ENCODE measurements at regions of chr3 and their contacts with region 1.

Region 1: DNA sequence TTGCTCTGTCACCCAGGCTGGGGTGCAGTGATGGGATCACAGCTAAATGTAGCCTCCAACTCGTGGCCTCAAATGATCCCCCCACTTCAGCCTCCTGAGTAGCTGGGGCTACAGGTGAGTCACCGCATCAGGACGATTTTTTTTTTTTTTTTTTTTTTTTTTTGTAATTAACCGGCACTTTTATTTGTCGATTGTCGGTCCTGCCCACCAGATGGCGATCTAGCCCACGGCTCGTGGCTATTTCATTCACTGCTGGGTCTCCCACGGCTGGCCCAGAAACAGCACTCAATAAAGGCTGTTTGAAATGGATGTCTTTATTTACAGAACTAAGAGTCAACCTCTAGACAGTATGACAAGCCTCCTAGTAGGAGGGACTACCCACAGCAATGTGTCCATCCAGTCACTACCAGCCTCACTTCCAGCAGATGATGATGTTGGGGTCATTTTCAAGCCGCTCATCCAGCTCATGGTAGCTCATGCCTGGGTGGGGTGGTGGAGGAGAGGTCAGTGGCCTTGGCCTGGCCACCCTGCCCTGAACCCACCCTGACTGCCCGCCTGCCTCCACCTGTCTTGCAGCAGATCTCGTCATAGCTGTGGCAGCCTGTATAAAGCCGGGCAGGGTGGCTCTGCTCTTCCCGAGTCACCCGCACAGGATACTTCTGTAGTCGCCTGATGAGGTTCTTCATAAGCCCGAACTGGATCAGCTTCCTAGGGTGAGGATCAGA is 1.8 kb upstream of the ZMYND10 start:
- DNase-seq: peak; percentile 75
- CTCF ChIP-seq: peak; percentile 59

Region 2: DNA sequence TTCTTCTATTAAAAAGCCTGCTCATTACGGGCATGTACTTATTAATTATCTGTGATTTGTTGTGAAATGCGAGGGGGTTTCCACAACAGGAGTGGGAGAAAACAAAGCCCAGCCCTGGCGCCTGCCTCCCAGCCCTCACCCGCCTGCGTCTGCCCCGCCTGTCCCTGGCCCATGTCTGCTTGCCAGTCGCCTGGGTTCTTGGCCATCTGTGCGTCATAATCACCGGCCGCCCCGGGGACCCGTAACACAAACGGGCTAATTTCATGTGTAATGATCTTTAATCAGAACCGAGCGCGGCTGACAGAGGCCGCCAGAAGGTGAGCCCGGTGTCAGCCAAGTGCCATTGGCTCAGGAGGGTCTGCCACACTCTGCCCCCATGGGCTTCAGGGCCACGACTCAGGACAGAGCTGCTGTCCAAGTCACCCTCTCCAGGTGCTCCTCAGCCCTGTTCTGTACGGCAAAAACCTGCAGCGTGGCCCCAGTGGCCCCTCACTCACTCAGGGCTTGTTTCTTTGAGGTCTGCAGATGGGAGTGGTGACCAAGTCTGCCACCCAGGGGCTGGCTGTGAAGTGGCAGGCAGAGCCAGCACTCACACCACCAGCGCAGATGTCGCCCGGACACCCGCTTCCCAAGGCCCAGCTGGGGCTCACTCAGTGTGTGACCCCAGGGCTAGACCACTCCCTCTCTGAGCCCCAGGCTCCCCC is 40.8 kb after region 1 on chr3:
- in situ Hi-C with region 1: no loop called
- DNase-seq: no peak
- CTCF ChIP-seq: peak; percentile 26

Region 3: DNA sequence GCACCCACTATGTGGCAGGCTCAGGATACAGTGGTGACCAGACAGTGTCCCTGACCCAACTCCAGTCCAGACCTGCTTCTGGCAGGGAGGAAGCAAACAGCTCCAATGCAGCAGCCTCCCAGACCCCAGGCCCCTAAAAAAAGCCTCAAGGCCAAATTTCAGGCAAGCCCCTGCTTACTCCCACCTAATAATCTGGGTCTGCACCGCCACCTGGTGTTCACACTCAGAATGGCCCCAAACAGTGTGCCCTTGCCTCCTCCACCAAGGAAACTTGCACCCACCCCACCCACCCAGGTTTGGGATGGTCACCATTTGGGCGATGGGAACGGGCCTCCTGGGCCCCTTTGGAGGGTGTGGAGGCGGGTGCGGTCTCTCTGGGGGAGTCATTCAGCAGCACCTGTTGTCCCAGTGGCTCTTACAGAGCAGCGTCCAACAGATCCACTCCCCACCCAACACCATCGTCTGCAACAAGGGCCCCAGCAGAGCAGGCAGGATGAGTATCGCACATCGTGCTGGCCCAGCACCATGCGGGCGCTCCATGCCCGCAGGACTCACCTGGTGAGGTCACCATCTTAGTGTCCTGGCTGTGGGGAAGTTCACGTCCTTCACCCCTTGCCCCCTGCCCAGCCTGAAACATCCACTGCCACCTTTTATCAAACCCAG is 202.9 kb after region 1 on chr3:
- in situ Hi-C with region 1: loop called (anchors 10 kb)
- DNase-seq: peak; percentile 79
- CTCF ChIP-seq: peak; percentile 85